ENCODE measurements at regions of chr18 and their contacts with region 1.

Region 1: GRCh38 chr18:21483051-21483450 is 117.5 kb downstream of the ESCO1 start:
- DNase-seq: no peak
- ATAC-seq: peak; percentile 12 to 20
- H3K4me3 ChIP-seq: no peak overlapping the region
- H3K27ac ChIP-seq: peak overlapping the region; percentile 54 to 83 (median 80)
- H3K4me1 ChIP-seq: peaks cover 31 to 48% of the 10 kb centered on the region in 2 donors
- H3K27me3 ChIP-seq: no peaks in the 10 kb centered on the region
- CTCF ChIP-seq: no peak
- POLR2A ChIP-seq: no peak

Region 2: DNA sequence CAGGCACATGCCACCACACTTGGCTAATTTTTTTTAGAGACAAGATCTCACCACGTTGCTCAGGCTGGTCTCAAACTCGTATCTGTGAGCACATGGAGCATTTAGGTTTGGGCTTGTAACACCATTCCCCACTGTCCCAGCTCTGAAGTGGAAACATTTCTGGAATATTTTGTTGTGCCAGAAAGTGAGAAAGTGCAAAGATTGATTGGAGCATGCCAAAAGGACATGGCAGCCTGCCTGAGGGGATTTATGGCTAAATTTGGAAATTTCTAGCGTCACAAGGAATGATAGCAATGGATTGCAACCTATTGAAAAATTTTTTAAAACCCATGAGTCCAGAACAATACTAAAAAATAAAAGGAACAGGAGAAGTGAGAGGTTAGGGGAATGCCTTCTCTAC is 19.3 kb before region 1 on chr18:
- in situ Hi-C with region 1: no loop called
- intact Hi-C with region 1: loop called (anchors 2 kb)
- DNase-seq: no peak
- ATAC-seq: no peak
- H3K4me3 ChIP-seq: no peak overlapping the region
- H3K27ac ChIP-seq: peak overlapping the region; percentile 17 to 49 (median 36)
- H3K4me1 ChIP-seq: peaks cover 22 to 23% of the 10 kb centered on the region in 2 donors
- H3K27me3 ChIP-seq: no peaks in the 10 kb centered on the region
- CTCF ChIP-seq: no peak
- POLR2A ChIP-seq: no peak